ENCODE measurements at regions of chr7 and their contacts with region 1.

Region 1: DNA sequence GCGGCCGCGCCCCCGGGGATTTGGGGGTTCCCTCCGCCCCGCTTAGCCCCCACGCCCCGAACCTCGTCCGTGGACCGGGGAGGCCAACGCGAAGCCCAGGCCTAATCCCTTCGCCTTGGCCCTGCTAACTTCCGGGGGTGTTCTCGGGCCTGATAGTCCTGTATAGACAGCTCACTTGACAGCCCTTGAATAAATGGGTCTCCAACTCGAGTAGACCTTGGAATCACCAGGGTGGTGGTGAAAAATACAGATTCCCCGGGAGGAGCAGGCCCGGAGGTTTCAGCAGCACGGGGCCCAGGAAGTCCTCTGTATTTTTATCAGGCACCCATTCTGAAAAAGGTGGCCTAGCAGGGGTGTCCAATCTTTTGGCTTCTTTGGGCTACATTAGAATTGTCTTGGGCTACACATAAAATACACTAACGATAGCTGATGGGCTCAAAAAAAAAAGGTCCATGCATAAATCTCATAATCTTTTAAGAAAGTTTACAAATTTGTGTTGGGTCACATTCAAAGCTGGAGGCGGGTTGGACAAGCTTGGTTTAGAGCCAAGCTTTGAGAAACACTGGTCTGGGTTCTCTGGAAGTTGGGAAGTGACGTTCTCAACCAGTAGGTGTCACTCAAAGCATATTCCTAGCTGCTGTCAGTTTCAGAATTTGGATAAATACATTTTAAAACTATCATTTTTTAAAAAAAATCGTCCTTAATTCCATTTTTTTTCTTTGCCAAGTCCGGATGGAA is 221.7 kb downstream of the PHTF2 start:
- DNase-seq: peak; percentile 59
- H3K4me3 Mint-ChIP-seq: peak overlapping the region; percentile 64
- H3K27ac Mint-ChIP-seq: no peak overlapping the region
- H3K4me1 Mint-ChIP-seq: peaks cover 9% of the 10 kb centered on the region
- H3K27me3 Mint-ChIP-seq: peaks cover 32% of the 10 kb centered on the region

Region 2: DNA sequence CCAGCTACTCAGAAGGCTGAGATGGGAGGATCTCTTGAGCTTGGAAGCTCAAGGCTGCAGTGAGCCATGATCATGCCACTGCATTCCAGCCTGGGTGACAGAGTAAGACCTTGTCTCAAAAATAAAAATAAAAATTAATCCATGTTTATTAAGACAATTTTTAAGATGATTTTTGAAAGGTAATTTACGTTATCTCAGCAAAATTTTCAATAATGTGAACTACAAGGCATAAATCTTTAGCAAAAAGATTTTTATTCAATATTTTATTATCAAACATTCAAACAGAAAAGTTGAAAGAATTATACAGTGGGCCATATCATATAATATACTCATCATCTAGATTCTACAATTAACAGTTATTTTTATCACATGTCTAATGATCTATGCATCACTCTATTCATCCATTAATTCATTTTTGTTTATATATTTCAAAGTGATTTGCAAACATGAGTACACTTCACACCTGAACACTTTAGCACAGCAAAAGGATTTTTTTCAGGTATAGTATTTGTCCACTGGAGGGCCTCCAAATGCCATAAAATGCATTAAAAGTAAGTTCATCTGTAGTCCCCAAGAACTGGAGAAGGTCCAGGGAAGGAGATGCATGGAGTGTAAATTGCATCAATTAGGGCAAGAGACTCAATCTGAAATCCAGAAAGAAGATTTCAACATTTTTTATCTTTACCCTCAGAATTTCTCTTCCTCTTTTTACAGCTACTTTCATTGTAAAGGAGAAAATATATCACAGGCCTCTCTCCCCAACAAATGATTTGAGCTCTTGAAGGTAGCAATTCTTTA is 362.7 kb before region 1 on chr7:
- CTCF ChIA-PET with region 1: interaction called, 5 read pairs
- intact Hi-C with region 1: loop called (anchors 1 kb)
- DNase-seq: peak; percentile 18
- H3K4me3 Mint-ChIP-seq: no peak overlapping the region
- H3K27ac Mint-ChIP-seq: no peak overlapping the region
- H3K4me1 Mint-ChIP-seq: no peaks in the 10 kb centered on the region
- H3K27me3 Mint-ChIP-seq: no peaks in the 10 kb centered on the region

Region 3: GRCh38 chr7:77684030-77684429 is 336.3 kb before region 1 on chr7:
- CTCF ChIA-PET with region 1: no interaction called
- intact Hi-C with region 1: no loop called
- DNase-seq: no peak
- H3K4me3 Mint-ChIP-seq: no peak overlapping the region
- H3K27ac Mint-ChIP-seq: no peak overlapping the region
- H3K4me1 Mint-ChIP-seq: peaks cover 20% of the 10 kb centered on the region
- H3K27me3 Mint-ChIP-seq: no peaks in the 10 kb centered on the region

Region 4: GRCh38 chr7:77940647-77941046 is 79.7 kb before region 1 on chr7:
- CTCF ChIA-PET with region 1: interaction called, 5 read pairs
- intact Hi-C with region 1: loop called (anchors 5 kb)
- DNase-seq: peak; percentile 40
- H3K4me3 Mint-ChIP-seq: no peak overlapping the region
- H3K27ac Mint-ChIP-seq: no peak overlapping the region
- H3K4me1 Mint-ChIP-seq: peaks cover 2% of the 10 kb centered on the region
- H3K27me3 Mint-ChIP-seq: no peaks in the 10 kb centered on the region

Region 5: DNA sequence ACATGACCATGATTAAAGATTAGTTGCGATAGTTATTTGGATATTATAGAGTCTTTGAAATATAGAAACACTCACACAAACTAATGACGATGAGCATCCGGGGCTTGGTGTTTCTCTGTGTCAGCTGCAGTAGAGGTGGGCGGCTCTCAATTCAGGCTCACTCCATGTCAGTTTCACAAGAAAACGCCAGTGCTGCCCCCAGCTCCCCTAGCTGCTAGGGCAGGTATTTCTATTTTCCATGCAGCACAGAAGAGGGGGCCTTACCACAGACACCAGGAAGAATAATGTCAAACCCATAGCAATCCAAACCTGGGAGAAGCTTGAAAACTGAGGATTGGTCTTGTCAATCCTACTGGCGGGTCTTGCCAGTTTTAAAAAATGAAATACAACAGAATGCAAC is 24.6 kb before region 1 on chr7:
- CTCF ChIA-PET with region 1: no interaction called
- intact Hi-C with region 1: no loop called
- DNase-seq: no peak
- H3K4me3 Mint-ChIP-seq: no peak overlapping the region
- H3K27ac Mint-ChIP-seq: no peak overlapping the region
- H3K4me1 Mint-ChIP-seq: no peaks in the 10 kb centered on the region
- H3K27me3 Mint-ChIP-seq: no peaks in the 10 kb centered on the region

Region 6: GRCh38 chr7:78039790-78040776 is 19.8 kb after region 1 on chr7:
- CTCF ChIA-PET with region 1: interaction called, 81 read pairs
- intact Hi-C with region 1: loop called (anchors 1 kb)
- DNase-seq: peak; percentile 54
- H3K4me3 Mint-ChIP-seq: no peak overlapping the region
- H3K27ac Mint-ChIP-seq: no peak overlapping the region
- H3K4me1 Mint-ChIP-seq: no peaks in the 10 kb centered on the region
- H3K27me3 Mint-ChIP-seq: peaks cover 29% of the 10 kb centered on the region

Region 7: GRCh38 chr7:78151229-78151628 is 130.9 kb after region 1 on chr7:
- CTCF ChIA-PET with region 1: no interaction called
- intact Hi-C with region 1: no loop called
- DNase-seq: no peak
- H3K4me3 Mint-ChIP-seq: no peak overlapping the region
- H3K27ac Mint-ChIP-seq: no peak overlapping the region
- H3K4me1 Mint-ChIP-seq: no peaks in the 10 kb centered on the region
- H3K27me3 Mint-ChIP-seq: peaks cover 2% of the 10 kb centered on the region

Region 8: GRCh38 chr7:78226059-78226719 is 205.9 kb after region 1 on chr7:
- CTCF ChIA-PET with region 1: no interaction called
- intact Hi-C with region 1: loop called (anchors 1 kb)
- DNase-seq: peak; percentile 59
- H3K4me3 Mint-ChIP-seq: no peak overlapping the region
- H3K27ac Mint-ChIP-seq: no peak overlapping the region
- H3K4me1 Mint-ChIP-seq: no peaks in the 10 kb centered on the region
- H3K27me3 Mint-ChIP-seq: peaks cover 7% of the 10 kb centered on the region

Region 9: DNA sequence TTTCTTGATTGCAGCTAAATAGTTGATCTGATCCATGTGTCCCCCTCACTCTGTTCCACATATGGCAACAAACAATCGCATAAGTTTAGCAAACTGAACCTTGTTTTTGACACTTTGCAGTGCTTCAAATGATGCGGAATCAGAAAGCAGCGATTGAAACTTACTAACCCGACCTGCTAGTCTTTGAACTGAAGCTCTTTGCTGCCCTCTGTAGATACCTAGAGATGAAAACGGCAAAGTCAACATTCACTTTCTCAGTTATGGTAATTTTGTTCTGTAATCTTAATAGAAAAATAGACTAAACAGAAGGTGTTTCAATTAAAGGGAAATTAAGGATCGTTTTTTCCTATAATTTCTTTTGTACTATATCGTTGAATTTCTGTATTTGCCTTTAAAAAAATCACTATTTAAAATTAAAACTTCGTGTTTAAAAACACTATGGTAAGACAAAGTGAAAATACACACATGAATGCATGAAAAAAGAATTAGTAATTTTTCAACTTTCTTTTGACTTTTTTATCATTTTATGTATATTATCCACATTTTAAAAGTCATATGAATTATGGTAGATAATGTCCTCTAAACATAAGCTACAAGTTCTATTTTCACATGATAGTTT is 1156.7 kb after region 1 on chr7:
- CTCF ChIA-PET with region 1: interaction called, 4 read pairs
- intact Hi-C with region 1: loop called (anchors 1 kb)
- DNase-seq: no peak
- H3K4me3 Mint-ChIP-seq: no peak overlapping the region
- H3K27ac Mint-ChIP-seq: no peak overlapping the region
- H3K4me1 Mint-ChIP-seq: peaks cover 2% of the 10 kb centered on the region
- H3K27me3 Mint-ChIP-seq: no peaks in the 10 kb centered on the region

Region 10: GRCh38 chr7:79272066-79272669 is 1251.9 kb after region 1 on chr7:
- CTCF ChIA-PET with region 1: no interaction called
- intact Hi-C with region 1: loop called (anchors 5 kb)
- DNase-seq: no peak
- H3K4me3 Mint-ChIP-seq: no peak overlapping the region
- H3K27ac Mint-ChIP-seq: no peak overlapping the region
- H3K4me1 Mint-ChIP-seq: no peaks in the 10 kb centered on the region
- H3K27me3 Mint-ChIP-seq: no peaks in the 10 kb centered on the region

Measured in activated naive CD4-positive, alpha-beta T cell treated with anti-CD3 and anti-CD28 coated beads for 36 hours (primary cell).